ENCODE measurements at regions of chr9 and their contacts with region 1.

Region 1: GRCh38 chr9:129823935-129824601 is at the start of gene TOR1A:
- DNase-seq: peak; percentile 87 to 95
- H3K4me3 ChIP-seq: peak within 1 kb of the TSS; percentile 81
- H3K27ac ChIP-seq: no peak within 1 kb of the TSS
- H3K4me1 ChIP-seq: no peaks in the 10 kb centered on the region; the same call in 1 of the 2 replicates
- H3K27me3 ChIP-seq: no peaks in the 10 kb centered on the region
- CTCF ChIP-seq: no peak
- total RNA-seq, gene TOR1A: 33.8 and 43.5 TPM in 2 replicates

Region 2: DNA sequence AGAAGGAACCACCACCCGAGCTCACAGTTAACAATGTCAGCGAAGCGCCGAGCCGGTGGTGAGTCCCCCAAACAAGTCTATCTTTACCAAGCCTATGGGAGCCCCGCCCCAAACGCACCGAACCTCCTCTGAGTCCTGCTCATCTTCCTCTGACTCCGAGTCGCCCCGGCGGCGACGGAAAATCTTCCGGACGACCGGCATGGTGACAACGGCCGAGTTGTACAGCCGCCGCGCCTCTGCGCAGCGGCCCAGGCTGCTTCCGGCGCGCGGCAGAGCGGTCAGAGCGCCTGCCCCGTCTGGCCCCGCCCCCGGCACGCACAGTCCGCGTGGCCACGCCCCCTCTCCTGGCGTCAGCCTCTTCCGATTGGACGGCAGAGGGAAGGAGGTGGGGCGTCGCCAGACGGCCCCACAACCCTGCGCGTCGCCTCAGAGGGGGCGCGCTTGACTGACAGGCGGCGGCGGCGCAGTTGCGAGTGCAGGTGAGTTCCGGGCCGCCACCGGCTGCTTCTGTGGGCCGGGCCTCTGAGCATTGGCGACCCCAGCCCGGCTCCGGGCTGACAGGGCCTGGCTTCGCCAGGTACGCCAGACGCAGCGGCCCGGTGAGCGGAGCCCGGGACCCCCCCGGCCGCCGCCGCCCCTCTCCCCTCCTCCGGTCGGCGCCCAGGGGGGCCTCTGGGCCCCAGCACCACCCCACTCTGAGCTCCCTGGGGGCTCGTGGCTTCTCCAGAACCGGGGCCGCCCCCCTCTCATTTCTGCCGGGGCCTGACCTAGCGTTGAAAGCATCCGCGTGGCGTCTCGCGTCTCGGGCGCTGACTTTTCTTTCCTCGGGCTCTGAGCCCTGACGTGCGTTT is 11.2 kb after region 1 on chr9 and contains the starts of genes C9orf78 and USP20:
- CTCF ChIA-PET with region 1: no interaction called
- POLR2A ChIA-PET with region 1: no interaction called
- intact Hi-C with region 1: loop called (anchors 1 kb)
- DNase-seq: peak; percentile 84 to 98
- H3K4me3 ChIP-seq: peak within 1 kb of the TSS; percentile 78
- H3K27ac ChIP-seq: no peak within 1 kb of the TSS
- H3K4me1 ChIP-seq: peaks cover 15% of the 10 kb centered on the region
- H3K27me3 ChIP-seq: no peaks in the 10 kb centered on the region
- CTCF ChIP-seq: no peak
- total RNA-seq, gene C9orf78: 39.2 and 51.7 TPM in 2 replicates
- total RNA-seq, gene USP20: 22.1 and 27.8 TPM in 2 replicates

Region 3: DNA sequence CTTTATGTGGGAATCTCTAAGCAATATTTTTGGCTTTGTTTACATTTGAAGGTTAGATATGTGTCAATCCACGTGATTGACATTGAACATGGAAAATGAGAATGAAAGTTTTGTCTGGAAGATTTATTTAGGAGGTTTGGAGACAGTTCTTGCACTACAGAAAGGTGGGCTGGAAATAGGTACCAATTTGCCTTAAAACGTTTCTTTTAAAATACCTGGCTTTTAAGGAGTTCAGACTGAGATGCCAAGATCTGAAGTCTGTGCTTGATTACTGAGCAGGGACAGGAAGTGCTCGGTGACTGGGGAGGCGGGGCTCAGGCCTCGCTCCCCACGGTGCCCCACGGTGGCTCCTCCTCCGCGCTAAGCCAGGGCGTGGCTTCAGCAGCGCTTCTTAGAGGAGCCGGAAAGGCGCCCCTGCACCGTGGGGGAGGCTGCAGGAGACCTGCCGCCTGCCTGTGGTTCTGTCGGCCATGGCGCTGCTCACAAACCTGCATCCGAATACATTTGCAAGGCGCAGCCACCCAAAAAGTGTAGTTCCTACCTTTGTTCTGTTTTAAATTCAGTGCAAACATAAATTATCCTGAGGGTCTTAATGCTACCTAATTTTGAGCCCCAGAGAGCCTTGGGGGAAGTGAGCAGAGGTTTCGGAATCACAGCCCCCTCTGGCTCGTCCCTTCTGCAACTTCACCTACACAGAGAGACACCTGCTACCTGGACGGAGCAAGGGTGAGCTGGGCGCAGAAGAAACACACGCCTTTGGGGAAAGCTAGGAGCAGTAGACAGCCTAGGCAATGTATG is 60.4 kb after region 1 on chr9:
- CTCF ChIA-PET with region 1: no interaction called
- POLR2A ChIA-PET with region 1: no interaction called
- intact Hi-C with region 1: no loop called
- DNase-seq: peak; percentile 78 to 92
- H3K4me3 ChIP-seq: peak overlapping the region; percentile 48; the same call in 1 of the 2 replicates
- H3K27ac ChIP-seq: no peak overlapping the region
- H3K4me1 ChIP-seq: peaks cover 36% of the 10 kb centered on the region
- H3K27me3 ChIP-seq: no peaks in the 10 kb centered on the region
- CTCF ChIP-seq: no peak

Region 4: DNA sequence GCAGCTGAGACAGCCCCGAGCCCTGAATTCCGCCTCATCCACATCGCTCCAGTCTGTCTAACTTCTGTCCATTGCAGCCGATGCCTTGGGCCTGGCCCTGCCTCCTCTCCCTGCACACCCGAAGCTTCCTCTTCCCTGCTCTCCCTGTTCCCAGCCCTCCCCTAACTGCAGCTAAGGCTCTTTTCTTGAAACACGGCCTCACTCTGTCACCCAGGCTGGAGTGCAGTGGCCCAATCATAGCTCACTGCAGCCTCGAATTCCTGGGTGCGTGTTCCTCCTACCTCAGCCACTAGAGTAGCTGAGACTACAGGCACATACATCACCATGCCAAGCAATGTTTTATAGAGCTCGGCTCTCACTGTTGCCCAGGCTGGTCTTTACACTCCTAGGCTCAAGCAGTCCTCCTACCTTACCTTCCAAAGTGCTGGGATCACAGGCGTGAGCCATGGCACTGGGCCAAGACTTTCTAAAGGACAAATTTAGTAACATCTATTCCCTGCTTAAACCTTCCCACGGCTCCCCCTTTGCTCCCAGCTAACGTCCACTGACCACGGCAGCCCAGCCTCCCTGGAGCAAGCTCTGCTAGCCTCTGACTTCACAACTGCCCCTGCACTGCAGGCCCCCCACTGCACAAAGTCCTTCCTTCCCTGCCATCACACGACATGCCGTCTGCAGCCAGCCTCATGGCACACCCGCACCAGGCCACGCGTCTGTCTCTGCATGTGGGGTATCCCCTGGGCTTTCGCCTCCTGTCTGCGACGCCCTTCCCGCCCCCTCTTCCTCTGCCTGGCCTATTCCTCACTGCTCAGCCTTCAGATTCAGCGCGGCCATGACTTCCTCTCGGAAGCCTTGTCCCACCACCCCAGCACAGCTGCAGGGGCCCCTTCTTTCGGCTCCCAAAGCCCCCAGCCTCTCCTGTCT is 1213.5 kb after region 1 on chr9:
- CTCF ChIA-PET with region 1: no interaction called
- POLR2A ChIA-PET with region 1: no interaction called
- intact Hi-C with region 1: no loop called
- DNase-seq: no peak
- H3K4me3 ChIP-seq: no peak overlapping the region
- H3K27ac ChIP-seq: no peak overlapping the region
- H3K4me1 ChIP-seq: no peaks in the 10 kb centered on the region
- H3K27me3 ChIP-seq: peaks cover 52% of the 10 kb centered on the region
- CTCF ChIP-seq: no peak